Colonic mucosa (tissue), 4 donors: ENCODE measurements at regions of chr18 and their contacts with region 1.

Region 1: DNA sequence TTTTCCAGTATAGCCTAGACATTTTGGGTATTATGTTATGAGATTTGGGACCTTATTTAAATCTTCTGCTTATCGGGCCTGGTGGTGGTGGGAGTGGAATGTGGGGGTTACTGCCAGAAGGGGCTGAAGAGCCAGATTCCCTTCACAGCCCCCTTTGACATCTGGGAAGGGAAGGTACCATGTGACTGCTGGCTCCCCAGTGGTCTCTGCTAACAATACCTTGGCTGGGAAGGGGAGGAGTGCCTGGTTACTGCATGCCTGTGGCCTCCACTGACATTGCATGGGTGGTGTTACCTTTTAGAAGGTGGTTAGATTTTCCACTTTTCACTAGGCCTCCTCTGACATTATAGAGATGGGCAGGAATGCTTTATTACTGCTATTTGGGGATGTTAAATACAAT is 8.0 kb downstream of the ATP9B start:
- DNase-seq: no peak
- H3K4me3 ChIP-seq: no peak overlapping the region
- H3K27ac ChIP-seq: no peak overlapping the region
- H3K4me1 ChIP-seq: no peaks in the 10 kb centered on the region
- H3K27me3 ChIP-seq: no peaks in the 10 kb centered on the region
- CTCF ChIP-seq: no peak

Region 2: DNA sequence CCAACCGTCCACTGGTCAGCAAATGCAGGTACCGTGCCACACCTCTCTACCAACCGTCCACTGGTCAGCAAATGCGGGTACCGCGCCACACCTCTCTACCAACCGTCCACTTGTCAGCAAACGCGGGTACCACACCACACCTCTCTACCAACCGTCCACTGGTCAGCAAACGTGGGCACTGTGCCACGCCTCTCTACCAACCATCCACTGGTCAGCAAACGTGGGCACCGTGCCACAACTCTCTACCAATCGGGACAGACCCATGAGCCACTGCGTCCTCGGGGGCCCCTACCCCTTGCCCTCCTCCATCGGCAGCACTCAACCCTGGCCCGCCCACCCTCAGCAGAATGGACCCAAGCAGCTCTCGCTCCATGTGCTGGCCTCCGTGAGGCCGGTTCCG is 323.9 kb before region 1 on chr18:
- intact Hi-C with region 1: no loop called
- DNase-seq: peak; percentile 11
- H3K4me3 ChIP-seq: no peak overlapping the region
- H3K27ac ChIP-seq: no peak overlapping the region
- H3K4me1 ChIP-seq: no peaks in the 10 kb centered on the region
- H3K27me3 ChIP-seq: no peaks in the 10 kb centered on the region
- CTCF ChIP-seq: no peak

Region 3: GRCh38 chr18:79030680-79031079 is 46.5 kb before region 1 on chr18:
- intact Hi-C with region 1: no loop called
- DNase-seq: no peak
- H3K4me3 ChIP-seq: no peak overlapping the region
- H3K27ac ChIP-seq: no peak overlapping the region
- H3K4me1 ChIP-seq: no peaks in the 10 kb centered on the region
- H3K27me3 ChIP-seq: no peaks in the 10 kb centered on the region
- CTCF ChIP-seq: no peak

Region 4: GRCh38 chr18:79123948-79124347 is 46.8 kb after region 1 on chr18:
- intact Hi-C with region 1: loop called (anchors 2 kb)
- DNase-seq: no peak
- H3K4me3 ChIP-seq: no peak overlapping the region
- H3K27ac ChIP-seq: no peak overlapping the region
- H3K4me1 ChIP-seq: no peaks in the 10 kb centered on the region
- H3K27me3 ChIP-seq: no peaks in the 10 kb centered on the region
- CTCF ChIP-seq: no peak

Region 5: DNA sequence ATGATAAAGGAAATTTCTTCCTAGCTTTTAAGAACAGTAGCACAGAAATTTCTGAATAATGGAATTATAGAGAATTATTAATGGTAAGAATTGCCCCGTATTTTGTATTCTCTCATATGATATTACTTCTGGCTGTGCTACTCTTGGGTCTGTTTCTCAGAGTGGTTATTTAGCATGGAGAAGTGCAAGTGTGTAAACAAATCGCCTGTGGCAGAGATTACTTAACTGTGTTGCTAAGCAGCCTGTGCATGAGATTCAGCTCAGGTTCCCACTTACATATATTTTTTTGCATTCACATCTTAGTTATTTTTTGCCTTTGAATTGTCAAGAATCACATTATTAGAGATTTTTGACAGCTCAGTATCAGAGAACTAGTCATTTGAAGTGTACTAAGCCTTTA is 238.4 kb after region 1 on chr18:
- intact Hi-C with region 1: no loop called
- DNase-seq: no peak
- H3K4me3 ChIP-seq: no peak overlapping the region
- H3K27ac ChIP-seq: no peak overlapping the region
- H3K4me1 ChIP-seq: no peaks in the 10 kb centered on the region
- H3K27me3 ChIP-seq: no peaks in the 10 kb centered on the region
- CTCF ChIP-seq: no peak

Region 6: GRCh38 chr18:79326413-79327198 is 249.4 kb after region 1 on chr18:
- intact Hi-C with region 1: no loop called
- DNase-seq: no peak
- H3K4me3 ChIP-seq: no peak overlapping the region
- H3K27ac ChIP-seq: no peak overlapping the region
- H3K4me1 ChIP-seq: no peaks in the 10 kb centered on the region
- H3K27me3 ChIP-seq: no peaks in the 10 kb centered on the region
- CTCF ChIP-seq: no peak